Endothelial cell of umbilical vein (primary cell): ENCODE measurements at regions of chr14 and their contacts with region 1.

Region 1: DNA sequence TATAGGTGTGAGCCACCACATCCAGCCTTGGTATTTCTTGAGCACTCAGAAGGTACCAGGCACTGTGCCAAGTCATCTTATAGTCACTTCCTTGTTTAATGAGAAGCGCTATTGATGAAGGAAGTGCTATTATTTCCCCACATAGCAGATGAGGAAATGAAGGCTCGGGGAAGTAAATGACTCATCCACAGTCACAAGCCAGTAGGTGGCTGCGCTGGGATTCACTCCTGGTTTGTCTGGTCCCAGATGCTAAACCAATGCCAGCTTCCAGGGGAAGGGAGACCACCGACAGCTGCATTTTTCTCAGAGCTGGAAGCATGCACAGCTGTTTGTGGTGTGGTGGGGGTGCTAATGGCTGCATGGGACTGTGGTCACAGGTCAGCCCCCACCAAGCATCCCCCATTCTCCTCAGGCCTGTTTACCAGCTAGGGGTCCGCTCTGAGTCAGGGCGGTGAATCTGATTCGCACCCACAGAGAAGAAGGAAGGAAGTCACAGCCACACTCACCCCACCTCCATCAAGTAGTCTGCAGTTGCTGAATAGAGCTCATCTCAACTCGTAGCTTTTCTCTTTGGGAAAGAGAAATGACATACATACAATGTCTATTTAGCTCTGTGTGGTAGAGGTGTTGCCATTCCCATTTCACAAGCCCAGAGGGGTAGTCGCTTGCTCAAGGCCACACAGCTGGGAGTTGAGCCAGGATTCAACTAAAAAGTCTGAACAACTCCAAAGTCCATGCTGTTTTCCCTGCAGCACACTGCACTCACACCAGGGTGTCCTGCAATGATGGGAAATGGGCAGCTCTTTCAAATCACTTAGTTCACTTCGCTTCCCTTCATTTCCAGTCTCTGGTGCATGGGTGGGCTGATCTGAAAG is 6.3 kb upstream of the LTBP2 start:
- DNase-seq: peak; percentile 83
- H3K4me3 ChIP-seq: no peak overlapping the region
- H3K27ac ChIP-seq: peak overlapping the region; percentile 98
- H3K4me1 ChIP-seq: peaks cover 85% of the 10 kb centered on the region
- H3K27me3 ChIP-seq: no peaks in the 10 kb centered on the region
- CTCF ChIP-seq: no peak
- POLR2A ChIP-seq: peak; percentile 46

Region 2: GRCh38 chr14:74638066-74638465 is 19.8 kb after region 1 on chr14:
- CTCF ChIA-PET with region 1: interaction called, 74 read pairs
- POLR2A ChIA-PET with region 1: interaction called, 8 read pairs
- dilution Hi-C with region 1: no loop called
- intact Hi-C with region 1: loop called (anchors 1 kb)
- DNase-seq: peak; percentile 83
- H3K4me3 ChIP-seq: no peak overlapping the region
- H3K27ac ChIP-seq: peak overlapping the region; percentile 88
- H3K4me1 ChIP-seq: peaks cover 20% of the 10 kb centered on the region
- H3K27me3 ChIP-seq: no peaks in the 10 kb centered on the region
- CTCF ChIP-seq: peak; percentile 14 to 26
- POLR2A ChIP-seq: peak; percentile 35

Region 3: GRCh38 chr14:74658537-74659130 is 40.3 kb after region 1 on chr14:
- CTCF ChIA-PET with region 1: interaction called, 3 read pairs
- POLR2A ChIA-PET with region 1: interaction called, 4 read pairs
- dilution Hi-C with region 1: no loop called
- intact Hi-C with region 1: loop called (anchors 2 kb)
- DNase-seq: peak; percentile 51
- H3K4me3 ChIP-seq: no peak overlapping the region
- H3K27ac ChIP-seq: peak overlapping the region; percentile 86
- H3K4me1 ChIP-seq: peaks cover 32% of the 10 kb centered on the region
- H3K27me3 ChIP-seq: no peaks in the 10 kb centered on the region
- CTCF ChIP-seq: no peak
- POLR2A ChIP-seq: no peak

Region 4: GRCh38 chr14:74712499-74713394 is 94.4 kb after region 1 on chr14 and contains the starts of genes AREL1 and FCF1:
- CTCF ChIA-PET with region 1: interaction called, 3 read pairs
- POLR2A ChIA-PET with region 1: interaction called, 4 read pairs
- dilution Hi-C with region 1: no loop called
- intact Hi-C with region 1: loop called (anchors 2 kb)
- DNase-seq: peak; percentile 87
- H3K4me3 ChIP-seq: peak within 1 kb of the TSS; percentile 66 to 93 (median 92)
- H3K27ac ChIP-seq: peak within 1 kb of the TSS; percentile 37
- H3K4me1 ChIP-seq: peaks cover 15% of the 10 kb centered on the region
- H3K27me3 ChIP-seq: no peaks in the 10 kb centered on the region
- CTCF ChIP-seq: no peak
- POLR2A ChIP-seq: peak; percentile 75
- total RNA-seq, gene AREL1: 46.4 and 50.3 TPM in 2 replicates
- total RNA-seq, gene FCF1: 57.8 and 58.2 TPM in 2 replicates

Region 5: DNA sequence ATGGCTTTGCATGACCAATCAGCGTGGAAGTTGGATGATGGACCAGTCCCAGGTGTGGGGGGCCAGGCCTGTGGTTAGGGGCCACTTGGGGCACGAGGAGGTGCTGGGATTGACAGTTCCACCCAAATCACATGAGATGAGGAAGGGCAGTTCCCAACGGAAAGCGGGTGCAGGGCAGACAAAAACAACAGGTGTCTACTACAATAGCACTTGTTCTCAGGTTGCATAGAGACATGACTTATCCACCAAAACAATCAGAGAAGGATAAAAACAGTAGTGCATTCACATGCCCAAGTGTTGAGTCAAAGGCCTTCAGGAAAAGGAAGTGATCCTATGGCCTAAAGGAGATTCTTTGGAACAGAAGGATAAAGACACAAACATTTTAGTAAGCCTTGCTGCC is 369.8 kb after region 1 on chr14:
- CTCF ChIA-PET with region 1: no interaction called
- POLR2A ChIA-PET with region 1: no interaction called
- dilution Hi-C with region 1: no loop called
- intact Hi-C with region 1: loop called (anchors 5 kb)
- DNase-seq: peak; percentile 97
- H3K4me3 ChIP-seq: no peak overlapping the region
- H3K27ac ChIP-seq: peak overlapping the region; percentile 99
- H3K4me1 ChIP-seq: peaks cover 39% of the 10 kb centered on the region
- H3K27me3 ChIP-seq: no peaks in the 10 kb centered on the region
- CTCF ChIP-seq: no peak
- POLR2A ChIP-seq: no peak